Left ventricle myocardium superior (tissue), 1 donor: ENCODE measurements at regions of chr17 and their contacts with region 1.

Region 1: GRCh38 chr17:50949989-50950881 is 84.1 kb upstream of the TOB1 start:
- DNase-seq: peak; percentile 86
- ATAC-seq: peak; percentile 79

Region 2: GRCh38 chr17:50853015-50853615 is 97.1 kb before region 1 on chr17:
- intact Hi-C with region 1: loop called (anchors 5 kb)
- DNase-seq: no peak
- ATAC-seq: no peak

Region 3: GRCh38 chr17:51000835-51001638 is 50.8 kb after region 1 on chr17:
- intact Hi-C with region 1: no loop called
- DNase-seq: no peak
- ATAC-seq: peak; percentile 71